Natural killer cell (primary cell): ENCODE measurements at regions of chr12 and their contacts with region 1.

Region 1: DNA sequence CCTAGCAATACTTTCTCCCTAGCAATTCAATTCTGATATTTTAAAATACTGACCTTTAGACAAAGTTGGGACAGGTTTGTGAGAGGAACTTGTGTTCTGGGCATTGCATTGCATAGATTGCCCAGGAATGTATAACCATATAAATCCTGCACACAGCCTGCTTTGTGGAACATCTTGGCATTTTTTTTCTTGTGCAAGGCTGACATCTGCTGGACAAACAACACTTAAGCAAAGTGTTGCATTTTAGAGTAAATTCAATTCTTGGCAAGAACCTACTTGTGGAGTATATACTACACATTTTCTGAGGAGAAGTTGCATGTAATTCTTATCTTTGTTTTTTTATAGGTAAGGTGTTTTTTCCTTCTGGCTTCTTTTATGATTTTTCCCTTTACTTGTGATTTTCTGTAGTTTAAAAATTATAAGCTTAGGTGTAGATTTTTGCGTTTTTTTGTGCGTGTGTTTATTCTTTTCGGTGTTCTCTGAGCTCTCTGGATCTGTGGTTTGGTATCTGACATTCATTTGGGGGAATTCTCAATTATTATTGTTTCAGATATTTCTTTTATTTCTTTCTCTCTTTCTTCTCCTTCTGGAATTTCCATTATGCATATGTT is 26.4 kb downstream of the TESPA1 start:
- DNase-seq: peak in 1 of 2 donors; percentile 82
- ATAC-seq: peak in 2 of 3 donors; percentile 34 to 45
- H3K4me3 ChIP-seq: no peak overlapping the region
- H3K4me3 Mint-ChIP-seq: peak overlapping the region; percentile 72
- H3K27ac ChIP-seq: no peak overlapping the region
- H3K27ac Mint-ChIP-seq: peak overlapping the region in 1 of 2 donors; percentile 84
- H3K4me1 ChIP-seq: peaks cover 19% of the 10 kb centered on the region
- H3K4me1 Mint-ChIP-seq: peaks cover 46 to 52% of the 10 kb centered on the region in 2 donors
- H3K27me3 ChIP-seq: no peaks in the 10 kb centered on the region
- H3K27me3 Mint-ChIP-seq: no peaks in the 10 kb centered on the region
- CTCF ChIP-seq: peak; percentile 83

Region 2: DNA sequence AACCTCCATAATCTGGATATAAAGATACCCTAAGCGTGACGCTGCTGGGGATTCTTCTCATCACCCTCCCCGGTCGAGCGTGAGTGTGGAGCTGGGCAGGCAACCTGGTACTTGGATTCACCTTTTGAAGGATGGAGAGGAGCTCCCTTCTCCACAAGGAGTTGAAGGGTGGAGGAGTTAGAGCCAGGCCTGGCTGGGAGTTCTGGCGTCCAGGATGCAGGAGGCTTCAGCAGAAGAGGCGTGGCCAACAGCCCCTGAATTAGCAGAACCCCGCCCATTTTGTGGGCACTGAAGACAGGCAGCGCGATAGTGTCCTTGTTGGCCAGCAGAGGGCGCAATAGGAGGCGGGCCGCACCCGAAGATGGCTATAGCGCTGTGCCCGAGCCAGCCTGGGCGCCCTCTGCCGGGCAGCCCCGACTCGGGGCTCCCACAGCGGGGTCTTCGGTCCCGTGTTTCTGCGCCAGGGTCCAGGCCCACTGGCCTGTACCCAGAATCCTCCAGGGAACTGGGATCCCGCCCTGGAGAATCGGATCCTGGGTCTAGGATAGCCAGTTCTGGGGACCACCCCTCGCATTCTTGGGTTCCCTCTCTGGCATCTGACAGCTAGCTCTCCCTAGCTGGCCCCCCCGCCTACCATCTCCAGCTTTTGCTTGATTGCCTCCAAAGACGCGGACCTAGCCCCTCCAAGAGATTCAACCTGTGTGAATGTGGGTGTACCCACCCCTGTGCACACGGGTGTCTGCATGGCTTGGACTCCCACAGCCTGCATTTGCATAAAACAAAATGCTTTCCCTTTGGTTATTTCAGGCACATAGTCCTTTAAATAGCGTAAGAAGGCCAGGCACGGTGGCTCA is 743.4 kb before region 1 on chr12:
- intact Hi-C with region 1: no loop called
- DNase-seq: peak; percentile 88 to 97
- ATAC-seq: peak; percentile 93 to 98 (median 95)
- H3K4me3 ChIP-seq: peak overlapping the region; percentile 2
- H3K4me3 Mint-ChIP-seq: peak overlapping the region; percentile 78
- H3K27ac ChIP-seq: no peak overlapping the region
- H3K27ac Mint-ChIP-seq: no peak overlapping the region
- H3K4me1 ChIP-seq: peaks cover 38% of the 10 kb centered on the region
- H3K4me1 Mint-ChIP-seq: peaks cover 17 to 36% of the 10 kb centered on the region in 2 donors
- H3K27me3 ChIP-seq: no peaks in the 10 kb centered on the region
- H3K27me3 Mint-ChIP-seq: peaks cover 0 to 14% of the 10 kb centered on the region in 2 donors
- CTCF ChIP-seq: peak; percentile 100

Region 3: GRCh38 chr12:54701940-54702592 is 256.1 kb before region 1 on chr12:
- intact Hi-C with region 1: loop called (anchors 1 kb)
- DNase-seq: peak in 1 of 2 donors; percentile 83
- ATAC-seq: peak; percentile 72 to 81 (median 73)
- H3K4me3 ChIP-seq: no peak overlapping the region
- H3K4me3 Mint-ChIP-seq: no peak overlapping the region
- H3K27ac ChIP-seq: no peak overlapping the region
- H3K27ac Mint-ChIP-seq: no peak overlapping the region
- H3K4me1 ChIP-seq: no peaks in the 10 kb centered on the region
- H3K4me1 Mint-ChIP-seq: no peaks in the 10 kb centered on the region
- H3K27me3 ChIP-seq: no peaks in the 10 kb centered on the region
- H3K27me3 Mint-ChIP-seq: peaks cover 18 to 27% of the 10 kb centered on the region in 2 donors
- CTCF ChIP-seq: peak; percentile 73

Region 4: DNA sequence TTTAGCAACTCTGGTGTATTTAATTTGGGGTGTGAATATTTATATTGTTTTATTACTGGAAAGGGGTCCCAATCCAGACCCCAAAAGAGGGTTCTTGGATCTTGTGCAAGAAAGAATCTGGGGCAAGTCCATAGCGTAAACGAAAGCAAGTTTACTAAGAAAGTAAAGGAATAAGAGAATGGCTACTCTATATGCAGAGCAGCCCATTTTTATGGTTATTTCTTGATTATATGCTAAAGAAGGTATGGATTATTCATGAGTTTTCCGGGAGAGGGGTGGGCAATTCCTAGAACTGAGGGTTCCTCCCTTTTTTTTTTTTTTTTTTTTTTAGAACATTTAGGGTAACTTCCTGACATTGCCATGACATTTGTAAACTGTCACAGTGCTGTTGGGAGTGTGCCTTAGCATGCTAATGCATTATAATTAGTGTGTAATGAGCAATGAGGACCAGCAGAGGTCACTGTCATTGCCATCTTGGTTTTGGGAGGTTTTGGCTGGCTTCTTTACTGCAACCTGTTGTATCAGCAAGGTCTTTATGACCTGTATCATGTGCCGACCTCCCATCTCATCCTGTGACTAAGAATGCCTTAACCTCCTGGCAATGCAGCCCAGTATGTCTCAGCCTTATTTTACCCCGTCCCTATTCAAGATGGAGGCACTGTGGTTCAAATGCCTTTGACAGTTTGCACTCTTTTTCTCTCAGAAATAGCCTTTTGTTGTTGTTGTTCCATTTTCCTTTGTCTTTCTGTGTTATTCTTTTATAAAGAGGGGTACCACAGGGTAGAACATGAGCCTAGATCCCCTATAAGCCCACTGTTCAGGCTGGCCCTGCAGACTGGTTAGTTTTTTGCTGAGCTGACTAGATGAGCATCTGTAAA is 234.5 kb before region 1 on chr12:
- intact Hi-C with region 1: loop called (anchors 1 kb)
- DNase-seq: peak in 1 of 2 donors; percentile 76
- ATAC-seq: peak; percentile 57 to 72 (median 72)
- H3K4me3 ChIP-seq: no peak overlapping the region
- H3K4me3 Mint-ChIP-seq: no peak overlapping the region
- H3K27ac ChIP-seq: no peak overlapping the region
- H3K27ac Mint-ChIP-seq: no peak overlapping the region
- H3K4me1 ChIP-seq: peaks cover 3% of the 10 kb centered on the region
- H3K4me1 Mint-ChIP-seq: peaks cover 13 to 16% of the 10 kb centered on the region in 2 donors
- H3K27me3 ChIP-seq: no peaks in the 10 kb centered on the region
- H3K27me3 Mint-ChIP-seq: peaks cover 12 to 32% of the 10 kb centered on the region in 2 donors
- CTCF ChIP-seq: peak; percentile 64

Region 5: GRCh38 chr12:54749191-54749818 is 208.8 kb before region 1 on chr12:
- intact Hi-C with region 1: loop called (anchors 1 kb)
- DNase-seq: peak in 1 of 2 donors; percentile 86
- ATAC-seq: peak; percentile 82 to 87 (median 85)
- H3K4me3 ChIP-seq: no peak overlapping the region
- H3K4me3 Mint-ChIP-seq: peak overlapping the region; percentile 59
- H3K27ac ChIP-seq: no peak overlapping the region
- H3K27ac Mint-ChIP-seq: no peak overlapping the region
- H3K4me1 ChIP-seq: peaks cover 3% of the 10 kb centered on the region
- H3K4me1 Mint-ChIP-seq: peaks cover 11 to 20% of the 10 kb centered on the region in 2 donors
- H3K27me3 ChIP-seq: no peaks in the 10 kb centered on the region
- H3K27me3 Mint-ChIP-seq: no peaks in the 10 kb centered on the region
- CTCF ChIP-seq: peak; percentile 84

Region 6: GRCh38 chr12:54853995-54854566 is 104.1 kb before region 1 on chr12 and contains the start of gene MUCL1:
- intact Hi-C with region 1: loop called (anchors 1 kb)
- DNase-seq: peak; percentile 39 to 85
- ATAC-seq: peak; percentile 98 to 100 (median 100)
- H3K4me3 ChIP-seq: no peak within 1 kb of the TSS
- H3K4me3 Mint-ChIP-seq: no peak within 1 kb of the TSS
- H3K27ac ChIP-seq: no peak within 1 kb of the TSS
- H3K27ac Mint-ChIP-seq: peak within 1 kb of the TSS in 1 of 2 donors; percentile 21
- H3K4me1 ChIP-seq: no peaks in the 10 kb centered on the region
- H3K4me1 Mint-ChIP-seq: peaks cover 6 to 8% of the 10 kb centered on the region in 2 donors
- H3K27me3 ChIP-seq: no peaks in the 10 kb centered on the region
- H3K27me3 Mint-ChIP-seq: no peaks in the 10 kb centered on the region
- CTCF ChIP-seq: peak; percentile 96
- total RNA-seq, gene MUCL1: not detected

Region 7: GRCh38 chr12:54935235-54935951 is 22.8 kb before region 1 on chr12:
- intact Hi-C with region 1: loop called (anchors 2 kb)
- DNase-seq: peak in 1 of 2 donors; percentile 69
- ATAC-seq: peak; percentile 84 to 88 (median 87)
- H3K4me3 ChIP-seq: no peak overlapping the region
- H3K4me3 Mint-ChIP-seq: peak overlapping the region; percentile 83
- H3K27ac ChIP-seq: peak overlapping the region; percentile 72
- H3K27ac Mint-ChIP-seq: peak overlapping the region; percentile 88 to 96
- H3K4me1 ChIP-seq: peaks cover 32% of the 10 kb centered on the region
- H3K4me1 Mint-ChIP-seq: peaks cover 55 to 60% of the 10 kb centered on the region in 2 donors
- H3K27me3 ChIP-seq: no peaks in the 10 kb centered on the region
- H3K27me3 Mint-ChIP-seq: no peaks in the 10 kb centered on the region
- CTCF ChIP-seq: no peak